ENCODE measurements at regions of chr19 and their contacts with region 1.

Region 1: GRCh38 chr19:21492947-21493906 is 12.2 kb upstream of the ZNF429 start:
- DNase-seq: no peak
- ATAC-seq: peak; percentile 53
- H3K4me3 ChIP-seq: no peak overlapping the region
- H3K27ac ChIP-seq: no peak overlapping the region
- H3K4me1 ChIP-seq: no peaks in the 10 kb centered on the region
- H3K27me3 ChIP-seq: no peaks in the 10 kb centered on the region
- CTCF ChIP-seq: no peak
- POLR2A ChIP-seq: no peak

Region 2: GRCh38 chr19:21314676-21315075 is 178.6 kb before region 1 on chr19:
- intact Hi-C with region 1: no loop called
- DNase-seq: no peak
- ATAC-seq: no peak
- H3K4me3 ChIP-seq: no peak overlapping the region
- H3K27ac ChIP-seq: no peak overlapping the region
- H3K4me1 ChIP-seq: peaks cover 20% of the 10 kb centered on the region
- H3K27me3 ChIP-seq: no peaks in the 10 kb centered on the region
- CTCF ChIP-seq: no peak
- POLR2A ChIP-seq: no peak

Region 3: DNA sequence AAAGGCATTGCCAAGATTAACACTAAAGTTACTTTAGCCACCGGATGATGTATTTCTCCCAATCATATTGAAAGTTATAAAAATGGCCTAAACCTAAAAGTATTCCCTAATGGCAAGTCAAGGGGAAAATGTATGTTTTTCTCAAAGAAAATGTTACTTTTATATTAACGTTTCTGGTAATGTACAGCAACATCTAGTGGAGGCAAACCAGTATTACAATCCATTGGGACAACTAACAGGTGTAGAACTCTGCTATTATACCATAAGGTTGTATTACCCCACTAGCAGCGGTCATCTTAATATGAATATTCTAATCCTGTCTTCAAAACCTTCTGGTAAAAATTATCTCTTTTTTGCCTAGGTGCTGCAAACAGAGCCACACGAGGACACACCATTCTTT is 205.0 kb after region 1 on chr19:
- intact Hi-C with region 1: loop called (anchors 10 kb)
- DNase-seq: peak in 1 of 4 donors; percentile 46
- ATAC-seq: peak; percentile 77
- H3K4me3 ChIP-seq: no peak overlapping the region
- H3K27ac ChIP-seq: no peak overlapping the region
- H3K4me1 ChIP-seq: peaks cover 19% of the 10 kb centered on the region
- H3K27me3 ChIP-seq: no peaks in the 10 kb centered on the region
- CTCF ChIP-seq: peak; percentile 26 to 82 (median 76)
- POLR2A ChIP-seq: no peak